CD8-positive, alpha-beta T cell (primary cell): ENCODE measurements at regions of chr7 and their contacts with region 1.

Region 1: GRCh38 chr7:144805627-144806239 is 30.1 kb downstream of the TPK1 start:
- DNase-seq: no peak
- ATAC-seq: no peak
- H3K4me3 ChIP-seq: no peak overlapping the region
- H3K4me3 Mint-ChIP-seq: no peak overlapping the region
- H3K27ac ChIP-seq: no peak overlapping the region
- H3K27ac Mint-ChIP-seq: no peak overlapping the region
- H3K4me1 ChIP-seq: peaks cover 27% of the 10 kb centered on the region
- H3K4me1 Mint-ChIP-seq: peaks cover 43% of the 10 kb centered on the region
- H3K27me3 ChIP-seq: no peaks in the 10 kb centered on the region
- H3K27me3 Mint-ChIP-seq: no peaks in the 10 kb centered on the region
- CTCF ChIP-seq: no peak

Region 2: GRCh38 chr7:144818511-144818910 is 12.8 kb after region 1 on chr7:
- CTCF ChIA-PET with region 1: no interaction called
- POLR2A ChIA-PET with region 1: interaction called, 3 read pairs
- intact Hi-C with region 1: loop called in 1 of 2 experiments (anchors 2 kb)
- DNase-seq: peak; percentile 30 to 89 (median 58)
- ATAC-seq: peak; percentile 96
- H3K4me3 ChIP-seq: no peak overlapping the region
- H3K4me3 Mint-ChIP-seq: peak overlapping the region; percentile 3
- H3K27ac ChIP-seq: peak overlapping the region; percentile 34 to 69
- H3K27ac Mint-ChIP-seq: peak overlapping the region; percentile 90
- H3K4me1 ChIP-seq: peaks cover 55% of the 10 kb centered on the region
- H3K4me1 Mint-ChIP-seq: peaks cover 82% of the 10 kb centered on the region
- H3K27me3 ChIP-seq: no peaks in the 10 kb centered on the region
- H3K27me3 Mint-ChIP-seq: no peaks in the 10 kb centered on the region
- CTCF ChIP-seq: no peak